Esophagus muscularis mucosa (tissue), 4 donors: ENCODE measurements at regions of chr13 and their contacts with region 1.

Region 1: GRCh38 chr13:109196948-109197347 is 567.5 kb downstream of the MYO16 start:
- DNase-seq: no peak
- H3K4me3 ChIP-seq: no peak overlapping the region
- H3K27ac ChIP-seq: no peak overlapping the region
- H3K4me1 ChIP-seq: peaks cover 0 to 9% (median 1%) of the 10 kb centered on the region in 4 donors
- H3K27me3 ChIP-seq: no peaks in the 10 kb centered on the region
- CTCF ChIP-seq: peak in 1 of 3 experiments; percentile 11
- EP300 ChIP-seq: no peak
- POLR2A ChIP-seq: no peak

Region 2: GRCh38 chr13:109162248-109163053 is 34.5 kb before region 1 on chr13:
- intact Hi-C with region 1: loop called (anchors 5 kb)
- DNase-seq: peak; percentile 85
- H3K4me3 ChIP-seq: no peak overlapping the region
- H3K27ac ChIP-seq: no peak overlapping the region
- H3K4me1 ChIP-seq: peaks cover 0 to 12% (median 4%) of the 10 kb centered on the region in 4 donors
- H3K27me3 ChIP-seq: no peaks in the 10 kb centered on the region
- CTCF ChIP-seq: no peak
- EP300 ChIP-seq: no peak
- POLR2A ChIP-seq: no peak